WTC11 (cell line): ENCODE measurements at regions of chr14 and their contacts with region 1.

Region 1: DNA sequence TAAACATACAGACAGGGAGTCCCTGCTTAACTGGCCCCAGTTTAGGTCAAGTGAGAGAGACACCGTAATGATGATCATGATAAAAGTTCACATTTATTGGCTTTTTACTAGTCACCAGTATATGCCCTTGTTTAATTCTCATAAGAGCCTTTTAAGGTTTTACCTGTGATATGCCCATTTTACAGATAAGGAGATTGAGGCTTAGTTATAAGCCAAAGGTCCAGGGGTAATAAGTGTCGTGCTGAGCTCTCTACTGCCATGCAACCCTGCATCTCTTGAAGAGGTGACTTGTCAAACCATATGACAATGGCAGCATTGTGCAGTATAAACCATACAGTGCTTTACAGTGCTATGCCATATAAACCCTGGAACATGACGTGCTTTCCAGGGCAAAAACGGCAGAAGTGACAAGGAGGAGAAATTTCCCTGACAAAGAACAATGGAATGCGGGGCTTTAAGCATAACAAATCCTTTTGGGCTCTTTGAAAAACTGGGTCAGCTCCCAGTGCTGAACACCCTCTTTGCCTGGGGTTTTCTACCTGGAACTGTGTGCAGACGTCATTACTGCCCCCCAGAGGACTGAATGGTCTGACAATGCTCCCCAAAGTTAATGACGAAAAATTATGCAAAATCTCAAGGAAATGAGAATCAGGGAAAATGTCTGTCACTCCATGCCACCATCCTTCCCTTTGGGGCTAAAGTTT is 59.7 kb upstream of the C14orf132 start:
- DNase-seq: peak; percentile 52
- ATAC-seq: peak; percentile 87
- H3K4me3 Mint-ChIP-seq: peak overlapping the region; percentile 24; the same call in 1 of the 2 replicates
- H3K27ac Mint-ChIP-seq: no peak overlapping the region; the same call in 1 of the 2 replicates
- H3K4me1 Mint-ChIP-seq: peaks cover 27% of the 10 kb centered on the region
- H3K27me3 Mint-ChIP-seq: no peaks in the 10 kb centered on the region; the same call in none of the 2 replicates
- CTCF ChIP-seq: no peak

Region 2: GRCh38 chr14:95948558-95948981 is 30.9 kb before region 1 on chr14:
- CTCF ChIA-PET with region 1: interaction called, 20 read pairs
- POLR2A ChIA-PET with region 1: no interaction called
- DNase-seq: peak; percentile 75
- ATAC-seq: peak; percentile 83
- H3K4me3 Mint-ChIP-seq: peak overlapping the region; percentile 19
- H3K27ac Mint-ChIP-seq: peak overlapping the region; percentile 98
- H3K4me1 Mint-ChIP-seq: peaks cover 76% of the 10 kb centered on the region
- H3K27me3 Mint-ChIP-seq: no peaks in the 10 kb centered on the region
- CTCF ChIP-seq: no peak